ENCODE measurements at regions of chr22 and their contacts with region 1.

Region 1: GRCh38 chr22:39021552-39022250 is 774 bp downstream of the APOBEC3D start:
- DNase-seq: no peak
- ATAC-seq: no peak
- H3K4me3 Mint-ChIP-seq: peak overlapping the region; percentile 95
- H3K27ac Mint-ChIP-seq: peak overlapping the region; percentile 95
- H3K4me1 Mint-ChIP-seq: peaks cover 53% of the 10 kb centered on the region
- H3K27me3 Mint-ChIP-seq: no peaks in the 10 kb centered on the region

Region 2: GRCh38 chr22:39039306-39040126 is 17.8 kb after region 1 on chr22:
- CTCF ChIA-PET with region 1: no interaction called
- POLR2A ChIA-PET with region 1: no interaction called
- intact Hi-C with region 1: loop called in 1 of 2 experiments (anchors 2 kb)
- DNase-seq: no peak
- ATAC-seq: no peak
- H3K4me3 Mint-ChIP-seq: peak overlapping the region; percentile 49
- H3K27ac Mint-ChIP-seq: peak overlapping the region; percentile 62
- H3K4me1 Mint-ChIP-seq: peaks cover 22% of the 10 kb centered on the region
- H3K27me3 Mint-ChIP-seq: no peaks in the 10 kb centered on the region

Region 3: DNA sequence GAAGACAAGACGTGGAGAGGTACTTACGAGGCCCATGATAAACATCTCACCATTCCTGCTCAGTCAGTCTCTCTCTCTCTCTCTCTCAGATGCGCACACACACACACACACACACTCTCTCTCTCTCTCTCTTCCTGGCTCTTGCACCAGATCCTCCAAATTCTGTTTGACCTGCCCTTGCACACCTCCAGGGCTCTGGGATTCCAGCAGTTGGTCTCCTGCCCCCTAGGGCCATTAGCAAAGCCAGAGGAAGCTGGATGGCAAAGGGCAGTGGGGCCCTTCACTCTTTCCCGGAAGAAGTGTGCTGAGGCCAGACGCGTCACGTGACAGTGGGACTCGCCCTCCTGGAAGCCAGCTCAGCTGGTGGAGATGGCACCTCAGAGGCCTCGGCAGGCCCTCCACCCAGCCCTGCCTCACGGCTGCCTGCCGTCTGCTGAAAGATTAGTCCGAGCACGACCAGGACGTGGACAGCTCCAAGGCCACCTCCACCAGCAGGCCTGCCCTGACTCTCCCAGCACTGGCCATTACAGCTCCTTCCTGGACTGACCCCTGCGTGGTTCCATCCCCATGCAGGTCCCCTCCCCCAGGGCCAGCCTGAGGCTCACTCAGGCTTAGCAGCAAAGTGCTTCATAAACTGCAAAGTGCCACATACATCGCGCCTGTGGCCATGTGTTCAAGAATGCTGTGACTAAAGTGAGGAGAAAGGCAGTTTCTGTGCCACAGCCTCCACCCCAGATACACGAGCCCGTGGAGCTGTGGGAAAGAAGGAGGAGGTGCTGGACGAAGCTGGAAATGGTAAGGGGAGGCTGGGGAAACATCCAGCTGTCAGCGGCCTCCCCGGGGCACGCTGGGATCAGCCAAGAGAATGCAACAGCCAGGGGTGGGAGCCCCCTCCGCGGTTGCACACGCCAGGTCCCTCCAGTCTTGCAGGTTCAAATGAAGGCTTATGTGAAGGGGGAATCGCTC is 219.4 kb after region 1 on chr22:
- CTCF ChIA-PET with region 1: no interaction called
- POLR2A ChIA-PET with region 1: no interaction called
- intact Hi-C with region 1: no loop called
- DNase-seq: peak; percentile 74
- ATAC-seq: peak; percentile 40
- H3K4me3 Mint-ChIP-seq: peak overlapping the region; percentile 67
- H3K27ac Mint-ChIP-seq: peak overlapping the region; percentile 85
- H3K4me1 Mint-ChIP-seq: peaks cover 59% of the 10 kb centered on the region
- H3K27me3 Mint-ChIP-seq: peaks cover 24% of the 10 kb centered on the region

Measured in activated CD4-positive, alpha-beta T cell treated with anti-CD3 and anti-CD28 coated beads for 36 hours (primary cell).